GM12878 (cell line): ENCODE measurements at regions of chr1 and their contacts with region 1.

Region 1: GRCh38 chr1:41720861-41721410 is 197.8 kb downstream of the HIVEP3 start:
- DNase-seq: no peak
- ATAC-seq: peak; percentile 80
- H3K4me3 ChIP-seq: no peak overlapping the region
- H3K27ac ChIP-seq: peak overlapping the region; percentile 21; the same call in 1 of the 2 replicates
- H3K4me1 ChIP-seq: peaks cover 69% of the 10 kb centered on the region
- H3K27me3 ChIP-seq: no peaks in the 10 kb centered on the region
- CTCF ChIP-seq: no peak
- EP300 ChIP-seq: no peak
- POLR2A ChIP-seq: no peak
- RAD21 ChIP-seq: no peak

Region 2: DNA sequence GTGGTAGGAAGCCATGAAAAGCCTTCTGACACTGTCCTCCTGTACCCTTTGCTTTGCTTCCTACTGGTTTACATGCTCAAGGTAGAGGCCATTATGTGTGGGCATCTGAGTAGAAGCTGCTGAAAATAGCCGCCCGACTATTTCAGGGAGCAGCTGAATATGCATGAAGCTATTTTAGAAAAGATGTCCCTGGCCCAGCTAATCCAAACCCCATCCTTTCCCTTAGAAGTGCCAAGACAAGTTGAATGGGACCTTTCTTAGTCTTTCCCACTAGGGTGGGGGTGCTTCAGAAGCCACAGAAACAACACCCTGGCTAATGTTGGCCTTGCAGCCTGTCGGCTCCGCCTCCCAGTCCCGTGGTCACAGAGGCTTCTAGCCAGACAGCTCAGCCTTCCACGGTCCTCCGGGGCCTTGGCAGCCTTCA is 31.4 kb before region 1 on chr1:
- CTCF ChIA-PET with region 1: interaction called, 4 read pairs
- POLR2A ChIA-PET with region 1: interaction called, 3 read pairs
- RAD21 ChIA-PET with region 1: interaction called, 4 read pairs
- SMC1A ChIA-PET with region 1: interaction called, 13 read pairs
- in situ Hi-C with region 1: no loop called
- intact Hi-C with region 1: loop called (anchors 5 kb)
- DNase-seq: no peak
- ATAC-seq: no peak
- H3K4me3 ChIP-seq: no peak overlapping the region
- H3K27ac ChIP-seq: no peak overlapping the region
- H3K4me1 ChIP-seq: peaks cover 20% of the 10 kb centered on the region
- H3K27me3 ChIP-seq: no peaks in the 10 kb centered on the region
- CTCF ChIP-seq: no peak
- EP300 ChIP-seq: no peak
- POLR2A ChIP-seq: no peak
- RAD21 ChIP-seq: no peak

Region 3: DNA sequence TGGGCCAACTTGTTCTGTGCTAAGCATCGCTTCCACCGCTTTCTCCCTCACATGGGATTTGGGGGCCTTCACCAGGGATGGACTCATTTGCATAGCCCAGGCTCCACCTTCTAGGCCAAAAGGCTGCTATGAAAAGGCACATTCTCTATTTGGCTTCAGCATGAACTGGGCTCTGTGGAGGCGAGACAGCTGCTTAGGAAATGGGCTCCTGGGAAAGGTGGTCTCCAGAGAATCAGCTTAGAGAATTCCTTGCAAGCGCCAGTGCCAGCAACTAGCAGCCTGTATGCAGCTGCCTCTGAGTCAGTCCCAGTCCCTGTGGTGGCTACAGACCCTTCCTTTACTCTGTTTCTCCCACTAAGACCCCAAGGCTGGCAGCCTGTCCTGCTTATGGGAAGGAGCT is 16.7 kb before region 1 on chr1:
- CTCF ChIA-PET with region 1: interaction called, 12 read pairs
- POLR2A ChIA-PET with region 1: interaction called, 10 read pairs
- RAD21 ChIA-PET with region 1: interaction called, 12 read pairs
- SMC1A ChIA-PET with region 1: interaction called, 31 read pairs
- in situ Hi-C with region 1: no loop called
- intact Hi-C with region 1: loop called (anchors 2 kb)
- DNase-seq: no peak
- ATAC-seq: no peak
- H3K4me3 ChIP-seq: no peak overlapping the region
- H3K27ac ChIP-seq: no peak overlapping the region
- H3K4me1 ChIP-seq: peaks cover 24% of the 10 kb centered on the region
- H3K27me3 ChIP-seq: no peaks in the 10 kb centered on the region
- CTCF ChIP-seq: no peak
- EP300 ChIP-seq: no peak
- POLR2A ChIP-seq: no peak
- RAD21 ChIP-seq: no peak

Region 4: GRCh38 chr1:42567043-42567442 is 846.1 kb after region 1 on chr1:
- CTCF ChIA-PET with region 1: no interaction called
- POLR2A ChIA-PET with region 1: no interaction called
- RAD21 ChIA-PET with region 1: no interaction called
- SMC1A ChIA-PET with region 1: no interaction called
- in situ Hi-C with region 1: no loop called
- intact Hi-C with region 1: no loop called
- DNase-seq: no peak
- ATAC-seq: no peak
- H3K4me3 ChIP-seq: no peak overlapping the region
- H3K27ac ChIP-seq: no peak overlapping the region
- H3K4me1 ChIP-seq: no peaks in the 10 kb centered on the region
- H3K27me3 ChIP-seq: no peaks in the 10 kb centered on the region
- CTCF ChIP-seq: no peak
- EP300 ChIP-seq: no peak
- POLR2A ChIP-seq: no peak
- RAD21 ChIP-seq: no peak